CD4-positive, alpha-beta T cell (primary cell): ENCODE measurements at regions of chr2 and their contacts with region 1.

Region 1: DNA sequence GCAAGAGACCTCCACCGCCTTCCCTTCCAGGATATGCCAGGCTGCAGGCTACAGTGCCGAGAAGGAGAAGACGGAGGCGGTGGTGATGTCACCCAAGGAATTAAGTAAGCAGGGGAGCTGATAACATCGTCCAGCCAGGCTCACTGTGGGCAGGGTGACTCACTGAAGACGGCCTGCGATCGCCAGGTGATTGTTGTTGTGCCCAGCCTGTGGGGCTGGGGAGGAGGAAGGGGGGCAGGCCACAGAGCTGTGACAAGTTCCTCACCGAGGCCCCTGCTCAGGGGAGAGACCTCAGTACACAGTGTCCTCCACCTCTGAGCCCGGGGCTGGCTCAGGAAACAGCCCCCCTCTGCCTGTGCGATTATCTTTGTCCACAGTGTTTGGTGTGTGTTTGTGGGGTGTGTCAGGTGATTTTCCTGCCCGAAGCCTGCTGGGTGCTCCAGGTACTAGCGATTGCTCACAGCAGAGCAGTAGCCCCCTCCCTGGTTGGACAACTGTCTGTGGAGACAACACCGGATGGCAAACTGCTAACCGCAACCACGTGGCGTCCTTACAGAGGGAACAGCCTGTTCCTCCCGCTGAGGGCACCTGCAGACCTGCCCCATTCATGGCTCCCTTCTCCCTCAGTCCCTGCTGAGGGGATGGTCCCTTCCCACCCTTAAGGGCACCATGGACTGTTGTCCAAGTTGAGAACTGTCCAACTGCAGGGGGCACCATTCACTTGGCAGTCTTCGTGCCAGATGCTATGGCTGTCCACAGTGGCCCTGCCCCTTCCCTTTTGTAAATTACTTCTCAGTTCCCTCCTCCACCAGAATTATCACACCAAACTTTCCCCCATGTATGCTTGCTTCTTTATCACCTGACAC is 95.1 kb downstream of the ZFP36L2 start:
- DNase-seq: peak; percentile 65 to 97 (median 80)
- ATAC-seq: peak; percentile 42
- H3K4me3 ChIP-seq: peak overlapping the region; percentile 21
- H3K4me3 Mint-ChIP-seq: peak overlapping the region; percentile 46
- H3K27ac ChIP-seq: peak overlapping the region; percentile 83 to 96
- H3K27ac Mint-ChIP-seq: peak overlapping the region; percentile 99
- H3K4me1 ChIP-seq: peaks cover 97% of the 10 kb centered on the region
- H3K4me1 Mint-ChIP-seq: peaks cover 89% of the 10 kb centered on the region
- H3K27me3 ChIP-seq: no peaks in the 10 kb centered on the region
- H3K27me3 Mint-ChIP-seq: no peaks in the 10 kb centered on the region
- CTCF ChIP-seq: peak; percentile 51

Region 2: GRCh38 chr2:42944779-42945415 is 186.4 kb before region 1 on chr2:
- CTCF ChIA-PET with region 1: no interaction called
- POLR2A ChIA-PET with region 1: no interaction called
- intact Hi-C with region 1: loop called in 1 of 2 experiments (anchors 2 kb)
- DNase-seq: no peak
- ATAC-seq: no peak
- H3K4me3 ChIP-seq: no peak overlapping the region
- H3K4me3 Mint-ChIP-seq: no peak overlapping the region
- H3K27ac ChIP-seq: no peak overlapping the region
- H3K27ac Mint-ChIP-seq: no peak overlapping the region
- H3K4me1 ChIP-seq: no peaks in the 10 kb centered on the region
- H3K4me1 Mint-ChIP-seq: peaks cover 6% of the 10 kb centered on the region
- H3K27me3 ChIP-seq: no peaks in the 10 kb centered on the region
- H3K27me3 Mint-ChIP-seq: no peaks in the 10 kb centered on the region
- CTCF ChIP-seq: no peak

Region 3: GRCh38 chr2:43059183-43059897 is 71.9 kb before region 1 on chr2:
- CTCF ChIA-PET with region 1: no interaction called
- POLR2A ChIA-PET with region 1: interaction called, 5 read pairs
- intact Hi-C with region 1: loop called in 1 of 2 experiments (anchors 2 kb)
- DNase-seq: peak; percentile 15 to 83 (median 44)
- ATAC-seq: peak; percentile 88
- H3K4me3 ChIP-seq: peak overlapping the region; percentile 2
- H3K4me3 Mint-ChIP-seq: peak overlapping the region; percentile 8
- H3K27ac ChIP-seq: peak overlapping the region; percentile 30 to 75
- H3K27ac Mint-ChIP-seq: peak overlapping the region; percentile 79
- H3K4me1 ChIP-seq: peaks cover 28% of the 10 kb centered on the region
- H3K4me1 Mint-ChIP-seq: peaks cover 44% of the 10 kb centered on the region
- H3K27me3 ChIP-seq: no peaks in the 10 kb centered on the region
- H3K27me3 Mint-ChIP-seq: no peaks in the 10 kb centered on the region
- CTCF ChIP-seq: no peak

Region 4: GRCh38 chr2:43178602-43179542 is 47.6 kb after region 1 on chr2:
- CTCF ChIA-PET with region 1: interaction called, 7 read pairs
- POLR2A ChIA-PET with region 1: interaction called, 165 read pairs
- intact Hi-C with region 1: loop called in 1 of 2 experiments (anchors 1 kb)
- DNase-seq: peak in 9 of 14 experiments; percentile 32 to 72 (median 56)
- ATAC-seq: no peak
- H3K4me3 ChIP-seq: no peak overlapping the region
- H3K4me3 Mint-ChIP-seq: peak overlapping the region; percentile 70
- H3K27ac ChIP-seq: peak overlapping the region; percentile 54 to 77
- H3K27ac Mint-ChIP-seq: peak overlapping the region; percentile 97
- H3K4me1 ChIP-seq: peaks cover 80% of the 10 kb centered on the region
- H3K4me1 Mint-ChIP-seq: peaks cover 73% of the 10 kb centered on the region
- H3K27me3 ChIP-seq: no peaks in the 10 kb centered on the region
- H3K27me3 Mint-ChIP-seq: no peaks in the 10 kb centered on the region
- CTCF ChIP-seq: no peak

Region 5: DNA sequence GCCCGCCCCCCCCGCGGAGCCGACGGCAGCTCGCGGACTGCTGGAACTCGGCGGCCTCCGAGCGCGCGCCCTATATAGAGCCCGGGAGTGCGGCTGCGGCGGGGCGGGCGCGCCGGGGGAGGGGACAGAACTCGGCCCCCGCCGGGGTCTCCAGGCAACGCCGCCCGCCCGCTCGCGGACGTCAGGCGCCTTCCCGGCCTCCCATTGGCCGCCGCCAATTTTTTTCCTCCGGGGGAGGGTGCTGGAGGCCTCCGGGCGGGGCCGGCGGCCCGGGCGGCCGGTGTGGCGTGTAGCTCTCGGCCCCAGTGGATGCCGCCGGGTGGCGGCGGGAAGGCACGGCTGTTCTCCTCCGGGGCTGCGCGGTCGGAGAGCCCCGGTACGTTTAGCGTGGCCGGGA is 95.3 kb after region 1 on chr2 and contains the start of gene ZFP36L2:
- CTCF ChIA-PET with region 1: interaction called, 303 read pairs
- POLR2A ChIA-PET with region 1: interaction called, 1,478 read pairs
- intact Hi-C with region 1: loop called (anchors 1 kb)
- DNase-seq: peak; percentile 89 to 98 (median 97)
- ATAC-seq: peak; percentile 59
- H3K4me3 ChIP-seq: peak within 1 kb of the TSS; percentile 97
- H3K4me3 Mint-ChIP-seq: peak within 1 kb of the TSS; percentile 93
- H3K27ac ChIP-seq: peak within 1 kb of the TSS; percentile 79 to 84
- H3K27ac Mint-ChIP-seq: peak within 1 kb of the TSS; percentile 98
- H3K4me1 ChIP-seq: peaks cover 31% of the 10 kb centered on the region
- H3K4me1 Mint-ChIP-seq: peaks cover 36% of the 10 kb centered on the region
- H3K27me3 ChIP-seq: no peaks in the 10 kb centered on the region
- H3K27me3 Mint-ChIP-seq: peaks cover 15% of the 10 kb centered on the region
- CTCF ChIP-seq: no peak
- total RNA-seq, gene ZFP36L2: 1,602 to 1,631 TPM